Activated CD4-positive, alpha-beta memory T cell treated with anti-CD3 and anti-CD28 coated beads, Interleukin-2, amount 10 ng/mL, durations not matched to agents 7 days and 5 days (primary cell): ENCODE measurements at regions of chr7 and their contacts with region 1.

Region 1: GRCh38 chr7:30594549-30595435 is at the start of gene GARS1:
- DNase-seq: peak; percentile 93
- H3K4me3 Mint-ChIP-seq: peak within 1 kb of the TSS; percentile 97
- H3K27ac Mint-ChIP-seq: peak within 1 kb of the TSS; percentile 98
- H3K4me1 Mint-ChIP-seq: peaks cover 53% of the 10 kb centered on the region
- H3K27me3 Mint-ChIP-seq: no peaks in the 10 kb centered on the region
- total RNA-seq, gene GARS1: 260 to 264 TPM

Region 2: DNA sequence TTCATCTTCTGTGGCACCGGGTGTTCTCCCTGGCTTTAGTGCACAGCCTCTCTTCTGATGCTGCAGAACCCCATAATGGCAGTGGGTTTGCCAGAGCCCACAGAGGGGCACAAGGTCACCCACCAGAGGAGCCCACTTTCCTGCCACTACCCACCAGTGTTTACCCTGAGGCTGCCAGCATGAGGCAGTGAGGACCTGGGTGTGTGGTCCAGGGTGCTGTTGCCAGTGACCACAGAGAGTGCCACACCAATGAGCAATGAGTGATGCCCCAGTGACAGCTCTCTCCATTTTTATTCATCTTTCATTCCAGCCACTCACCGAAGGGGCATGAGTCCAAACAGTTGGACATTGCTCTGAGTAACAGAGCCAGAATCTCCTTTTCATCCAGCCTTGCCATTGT is 425.2 kb before region 1 on chr7:
- CTCF ChIA-PET with region 1: no interaction called
- POLR2A ChIA-PET with region 1: no interaction called
- DNase-seq: no peak
- H3K4me3 Mint-ChIP-seq: no peak overlapping the region
- H3K27ac Mint-ChIP-seq: no peak overlapping the region
- H3K4me1 Mint-ChIP-seq: no peaks in the 10 kb centered on the region
- H3K27me3 Mint-ChIP-seq: no peaks in the 10 kb centered on the region

Region 3: GRCh38 chr7:30478349-30479201 is 116.2 kb before region 1 on chr7 and contains the start of gene NOD1:
- CTCF ChIA-PET with region 1: no interaction called
- POLR2A ChIA-PET with region 1: interaction called, 18 read pairs
- DNase-seq: peak; percentile 75
- H3K4me3 Mint-ChIP-seq: peak within 1 kb of the TSS; percentile 93
- H3K27ac Mint-ChIP-seq: peak within 1 kb of the TSS; percentile 87
- H3K4me1 Mint-ChIP-seq: peaks cover 55% of the 10 kb centered on the region
- H3K27me3 Mint-ChIP-seq: no peaks in the 10 kb centered on the region
- total RNA-seq, gene NOD1: 19.6 to 22.6 TPM

Region 4: GRCh38 chr7:30604901-30605300 is 10.1 kb after region 1 on chr7:
- CTCF ChIA-PET with region 1: no interaction called
- POLR2A ChIA-PET with region 1: interaction called, 10 read pairs
- DNase-seq: no peak
- H3K4me3 Mint-ChIP-seq: no peak overlapping the region
- H3K27ac Mint-ChIP-seq: no peak overlapping the region
- H3K4me1 Mint-ChIP-seq: peaks cover 45% of the 10 kb centered on the region
- H3K27me3 Mint-ChIP-seq: no peaks in the 10 kb centered on the region

Region 5: GRCh38 chr7:30612658-30613265 is 18.0 kb after region 1 on chr7:
- CTCF ChIA-PET with region 1: no interaction called
- POLR2A ChIA-PET with region 1: interaction called, 20 read pairs
- DNase-seq: no peak
- H3K4me3 Mint-ChIP-seq: no peak overlapping the region
- H3K27ac Mint-ChIP-seq: peak overlapping the region; percentile 8
- H3K4me1 Mint-ChIP-seq: peaks cover 39% of the 10 kb centered on the region
- H3K27me3 Mint-ChIP-seq: no peaks in the 10 kb centered on the region

Region 6: GRCh38 chr7:30983042-30983913 is 388.5 kb after region 1 on chr7:
- CTCF ChIA-PET with region 1: no interaction called
- POLR2A ChIA-PET with region 1: no interaction called
- DNase-seq: peak; percentile 78
- H3K4me3 Mint-ChIP-seq: no peak overlapping the region
- H3K27ac Mint-ChIP-seq: no peak overlapping the region
- H3K4me1 Mint-ChIP-seq: peaks cover 19% of the 10 kb centered on the region
- H3K27me3 Mint-ChIP-seq: peaks cover 16% of the 10 kb centered on the region